ENCODE measurements at regions of chr10 and their contacts with region 1.

Region 1: GRCh38 chr10:110260746-110261477 is 43.8 kb downstream of the SMNDC1 start:
- DNase-seq: no peak
- ATAC-seq: no peak
- H3K4me3 ChIP-seq: no peak overlapping the region
- H3K4me3 Mint-ChIP-seq: no peak overlapping the region
- H3K27ac ChIP-seq: no peak overlapping the region
- H3K27ac Mint-ChIP-seq: no peak overlapping the region
- H3K4me1 ChIP-seq: no peaks in the 10 kb centered on the region
- H3K4me1 Mint-ChIP-seq: no peaks in the 10 kb centered on the region
- H3K27me3 ChIP-seq: no peaks in the 10 kb centered on the region
- H3K27me3 Mint-ChIP-seq: no peaks in the 10 kb centered on the region
- CTCF ChIP-seq: no peak

Region 2: DNA sequence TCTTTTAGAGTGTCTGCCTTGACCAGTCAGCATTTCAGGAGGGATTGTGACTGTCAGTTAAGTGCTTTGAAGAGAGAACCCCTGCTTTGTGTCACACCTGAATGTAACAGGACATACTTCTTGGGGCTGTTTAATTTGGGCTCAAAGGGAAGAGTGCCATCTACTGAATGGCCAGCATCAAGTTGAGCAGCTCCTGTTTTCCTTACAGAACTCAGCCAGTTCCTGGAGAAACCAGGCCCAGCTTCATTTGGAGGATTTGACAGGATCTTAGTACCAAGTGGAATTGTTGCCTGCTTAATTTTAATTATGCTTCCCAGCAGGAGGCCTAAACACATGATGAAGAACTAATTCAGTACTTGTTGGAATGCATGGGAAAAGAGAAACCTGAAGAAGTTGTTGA is 244.9 kb before region 1 on chr10:
- CTCF ChIA-PET with region 1: no interaction called
- POLR2A ChIA-PET with region 1: interaction called, 14 read pairs
- intact Hi-C with region 1: no loop called
- DNase-seq: no peak
- ATAC-seq: no peak
- H3K4me3 ChIP-seq: no peak overlapping the region
- H3K4me3 Mint-ChIP-seq: no peak overlapping the region
- H3K27ac ChIP-seq: no peak overlapping the region
- H3K27ac Mint-ChIP-seq: no peak overlapping the region
- H3K4me1 ChIP-seq: peaks cover 32 to 36% of the 10 kb centered on the region in 2 donors
- H3K4me1 Mint-ChIP-seq: peaks cover 67% of the 10 kb centered on the region
- H3K27me3 ChIP-seq: no peaks in the 10 kb centered on the region
- H3K27me3 Mint-ChIP-seq: no peaks in the 10 kb centered on the region
- CTCF ChIP-seq: no peak

Region 3: GRCh38 chr10:110279407-110279986 is 18.6 kb after region 1 on chr10:
- CTCF ChIA-PET with region 1: interaction called, 6 read pairs
- POLR2A ChIA-PET with region 1: interaction called, 12 read pairs
- intact Hi-C with region 1: no loop called
- DNase-seq: peak; percentile 79
- ATAC-seq: peak; percentile 68
- H3K4me3 ChIP-seq: peak overlapping the region in 1 of 5 experiments; percentile 38
- H3K4me3 Mint-ChIP-seq: peak overlapping the region; percentile 26
- H3K27ac ChIP-seq: no peak overlapping the region
- H3K27ac Mint-ChIP-seq: no peak overlapping the region
- H3K4me1 ChIP-seq: peaks cover 11 to 17% of the 10 kb centered on the region in 2 donors
- H3K4me1 Mint-ChIP-seq: peaks cover 21% of the 10 kb centered on the region
- H3K27me3 ChIP-seq: no peaks in the 10 kb centered on the region
- H3K27me3 Mint-ChIP-seq: no peaks in the 10 kb centered on the region
- CTCF ChIP-seq: peak; percentile 84

Measured in B cell (primary cell).